ENCODE measurements at regions of chr17 and their contacts with region 1.

Region 1: DNA sequence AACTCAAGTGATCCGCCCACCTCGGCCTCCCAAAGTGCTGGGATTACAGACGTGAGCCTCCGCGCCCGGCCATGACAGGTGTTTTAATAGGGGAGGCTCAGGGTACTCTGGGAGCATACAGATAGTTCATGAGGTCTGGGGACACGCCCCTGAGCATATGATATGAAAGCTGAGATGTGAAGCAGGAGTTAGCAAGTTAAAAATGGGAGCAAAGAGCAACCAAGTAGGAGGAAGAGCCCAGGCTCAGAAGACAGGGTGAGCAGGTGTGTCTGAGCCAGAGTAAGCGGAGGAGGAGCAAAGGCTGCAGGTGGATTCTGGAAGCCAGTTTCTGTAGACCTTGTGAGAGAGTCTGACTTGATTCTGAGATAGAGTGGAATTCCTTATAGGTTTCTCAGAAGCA is 103.6 kb downstream of the DNAH9 start:
- DNase-seq: no peak
- H3K4me3 ChIP-seq: no peak overlapping the region
- H3K27ac ChIP-seq: no peak overlapping the region
- H3K4me1 ChIP-seq: no peaks in the 10 kb centered on the region
- H3K27me3 ChIP-seq: no peaks in the 10 kb centered on the region
- CTCF ChIP-seq: no peak
- POLR2A ChIP-seq: no peak

Region 2: DNA sequence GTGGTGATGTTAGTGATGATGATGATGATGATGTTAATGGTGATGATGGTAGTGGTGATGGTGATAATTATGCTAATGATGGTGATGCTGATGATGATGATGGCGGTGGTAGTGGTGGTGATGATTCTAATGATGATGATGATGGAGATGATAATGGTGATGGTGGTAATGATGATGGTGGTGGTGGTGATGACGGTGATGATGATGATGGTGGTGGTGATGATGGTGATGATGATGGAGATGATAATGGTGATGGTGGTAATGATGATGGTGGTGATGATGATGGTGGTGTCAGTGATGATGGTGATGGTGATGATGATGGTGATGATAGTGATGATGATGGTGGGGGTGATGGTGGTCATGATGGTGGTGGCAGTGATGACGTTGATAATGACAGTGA is 28.8 kb after region 1 on chr17:
- intact Hi-C with region 1: no loop called
- DNase-seq: no peak
- H3K4me3 ChIP-seq: no peak overlapping the region
- H3K27ac ChIP-seq: no peak overlapping the region
- H3K4me1 ChIP-seq: no peaks in the 10 kb centered on the region
- H3K27me3 ChIP-seq: no peaks in the 10 kb centered on the region
- CTCF ChIP-seq: no peak
- POLR2A ChIP-seq: no peak

Region 3: GRCh38 chr17:11744696-11745095 is 42.8 kb after region 1 on chr17:
- intact Hi-C with region 1: loop called (anchors 2 kb)
- DNase-seq: no peak
- H3K4me3 ChIP-seq: no peak overlapping the region
- H3K27ac ChIP-seq: no peak overlapping the region
- H3K4me1 ChIP-seq: no peaks in the 10 kb centered on the region
- H3K27me3 ChIP-seq: no peaks in the 10 kb centered on the region
- CTCF ChIP-seq: no peak
- POLR2A ChIP-seq: no peak

Measured in breast epithelium (tissue), 4 donors.